ENCODE measurements at regions of chr6 and their contacts with region 1.

Region 1: DNA sequence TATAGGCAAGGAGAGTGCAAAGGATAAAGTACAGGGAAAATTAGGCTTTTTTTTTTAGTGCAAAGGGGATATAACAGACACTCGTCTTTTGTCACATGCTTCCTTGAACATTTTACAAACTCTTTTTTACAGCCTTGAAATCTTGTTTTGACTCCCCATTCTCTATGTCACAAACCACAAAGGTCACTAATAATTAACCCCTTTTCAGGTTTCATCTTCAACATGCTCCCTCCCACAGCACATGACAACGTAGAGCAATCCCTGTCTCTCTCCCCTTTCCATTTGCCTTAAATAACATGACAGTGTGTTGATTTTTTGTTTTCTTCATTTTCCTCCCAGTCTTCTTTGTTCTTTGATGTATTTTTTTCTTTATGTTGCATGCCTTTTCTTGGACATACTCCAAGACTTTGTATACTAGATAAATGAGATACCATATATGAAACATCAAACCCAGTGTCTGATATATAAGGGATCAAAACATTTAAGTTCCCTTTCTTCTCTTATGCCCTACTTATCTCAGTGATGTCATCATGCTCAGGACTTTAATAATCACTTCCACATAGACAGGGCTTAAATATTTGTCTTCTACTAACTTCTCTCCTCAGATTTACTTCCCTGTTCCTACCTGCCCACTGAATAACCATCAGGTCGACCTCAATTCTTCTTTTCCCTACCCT is 378.7 kb upstream of the HSF2 start:
- DNase-seq: no peak
- H3K4me3 ChIP-seq: no peak overlapping the region
- H3K27ac ChIP-seq: no peak overlapping the region
- H3K27me3 ChIP-seq: no peaks in the 10 kb centered on the region
- CTCF ChIP-seq: no peak

Region 2: GRCh38 chr6:121430514-121431460 is 589.9 kb before region 1 on chr6:
- in situ Hi-C with region 1: loop called (anchors 10 kb)
- DNase-seq: no peak
- H3K4me3 ChIP-seq: no peak overlapping the region
- H3K27ac ChIP-seq: no peak overlapping the region
- H3K27me3 ChIP-seq: no peaks in the 10 kb centered on the region
- CTCF ChIP-seq: peak; percentile 63

Region 3: GRCh38 chr6:121680058-121680457 is 340.7 kb before region 1 on chr6:
- in situ Hi-C with region 1: no loop called
- DNase-seq: no peak
- H3K4me3 ChIP-seq: no peak overlapping the region
- H3K27ac ChIP-seq: no peak overlapping the region
- H3K27me3 ChIP-seq: no peaks in the 10 kb centered on the region
- CTCF ChIP-seq: no peak

Region 4: DNA sequence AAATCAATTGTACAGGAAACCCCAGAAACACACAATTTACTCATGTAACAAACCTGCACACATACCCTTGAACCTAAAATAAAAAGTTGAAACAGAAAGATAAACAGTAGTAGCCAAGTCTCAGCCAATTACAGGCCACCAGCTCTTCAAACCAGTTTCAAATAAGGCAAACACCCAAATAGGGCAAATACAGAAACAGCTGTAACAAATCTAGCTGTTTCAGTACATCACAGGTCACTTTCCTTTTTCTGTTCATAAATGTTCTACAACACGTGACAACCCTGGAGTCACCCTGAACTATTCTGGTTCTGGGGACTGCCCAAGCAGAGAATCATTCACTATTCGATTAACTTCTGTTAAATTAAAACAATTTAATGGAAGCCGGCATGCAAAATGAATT is 256.2 kb before region 1 on chr6:
- in situ Hi-C with region 1: no loop called
- DNase-seq: no peak
- H3K4me3 ChIP-seq: no peak overlapping the region
- H3K27ac ChIP-seq: no peak overlapping the region
- H3K27me3 ChIP-seq: no peaks in the 10 kb centered on the region
- CTCF ChIP-seq: no peak

Region 5: DNA sequence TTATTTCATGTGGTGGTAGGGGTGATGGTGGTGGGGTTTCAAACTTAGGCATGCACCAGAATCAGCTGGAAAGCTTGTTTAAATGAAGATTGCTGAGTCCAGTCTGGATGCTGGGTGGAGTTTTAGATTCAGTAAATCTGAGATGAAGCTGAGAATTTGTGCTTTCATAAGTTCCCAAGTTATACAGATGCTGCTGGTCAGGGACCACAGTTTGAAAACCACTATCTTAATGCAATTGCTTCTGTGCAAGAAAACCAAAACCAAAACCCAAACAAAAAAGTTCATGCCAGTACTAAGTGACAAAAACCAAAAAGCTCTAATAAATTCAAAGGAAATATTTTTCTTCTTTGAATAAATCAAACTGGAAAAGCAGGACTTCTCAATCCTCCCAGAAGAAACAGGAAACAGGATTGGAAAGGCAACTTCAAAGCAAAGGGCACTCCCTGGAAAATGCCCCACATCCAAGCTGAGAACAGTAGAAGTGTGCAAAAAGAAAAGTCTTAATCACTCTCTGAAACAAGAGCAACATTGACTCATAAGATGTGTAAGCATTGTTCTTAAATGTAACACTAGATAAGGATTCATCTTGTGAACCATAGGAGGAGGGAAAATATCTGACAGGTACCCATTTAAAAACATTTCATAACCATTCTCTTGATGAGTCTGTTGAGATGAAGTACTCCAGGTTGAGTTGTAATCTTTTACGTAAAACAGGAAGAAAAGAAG is 102.7 kb before region 1 on chr6:
- in situ Hi-C with region 1: no loop called
- DNase-seq: no peak
- H3K4me3 ChIP-seq: no peak overlapping the region
- H3K27ac ChIP-seq: no peak overlapping the region
- H3K27me3 ChIP-seq: no peaks in the 10 kb centered on the region
- CTCF ChIP-seq: no peak

Measured in brain microvascular endothelial cell (primary cell).